Spleen (tissue), 13 donors: ENCODE measurements at regions of chr10 and their contacts with region 1.

Region 1: GRCh38 chr10:98486421-98486820 is 39.7 kb upstream of the HPS1 start:
- DNase-seq: no peak
- H3K4me3 ChIP-seq: no peak overlapping the region
- H3K27ac ChIP-seq: no peak overlapping the region
- H3K4me1 ChIP-seq: no peaks in the 10 kb centered on the region
- H3K27me3 ChIP-seq: peaks cover 0 to 3% (median 0%) of the 10 kb centered on the region in 7 donors
- CTCF ChIP-seq: no peak
- POLR2A ChIP-seq: no peak

Region 2: DNA sequence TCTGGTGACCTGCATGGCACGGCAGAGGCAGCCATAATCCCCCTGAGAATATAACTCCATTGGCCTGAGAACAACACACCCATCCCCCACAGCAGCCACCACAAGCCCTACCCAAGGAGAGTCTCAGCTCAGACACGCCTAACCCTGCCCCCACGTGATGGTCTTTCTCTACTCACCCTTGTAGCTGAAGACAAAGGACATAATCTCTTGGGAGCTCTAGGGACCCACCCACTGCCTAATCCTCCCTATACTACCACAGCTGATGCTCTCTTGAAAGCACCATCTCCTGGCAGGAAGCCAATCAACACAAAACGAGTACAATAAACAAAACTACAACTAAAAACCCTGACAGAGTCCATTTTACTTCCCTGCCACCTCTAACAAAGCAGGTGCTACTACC is 780.0 kb after region 1 on chr10:
- intact Hi-C with region 1: loop called (anchors 5 kb)
- DNase-seq: no peak
- H3K4me3 ChIP-seq: no peak overlapping the region
- H3K27ac ChIP-seq: no peak overlapping the region
- H3K4me1 ChIP-seq: no peaks in the 10 kb centered on the region
- H3K27me3 ChIP-seq: peaks cover 0 to 16% (median 0%) of the 10 kb centered on the region in 7 donors
- CTCF ChIP-seq: no peak
- POLR2A ChIP-seq: no peak